ENCODE measurements at regions of chr6 and their contacts with region 1.

Region 1: GRCh38 chr6:138692058-138692977 is 81.3 kb upstream of the CCDC28A start:
- DNase-seq: peak; percentile 76
- H3K4me3 ChIP-seq: peak overlapping the region; percentile 65 to 97 (median 84)
- H3K27ac ChIP-seq: peak overlapping the region; percentile 84 to 93 (median 88)
- H3K4me1 ChIP-seq: peaks cover 0 to 15% (median 9%) of the 10 kb centered on the region in 4 donors
- H3K27me3 ChIP-seq: no peaks in the 10 kb centered on the region
- CTCF ChIP-seq: peak; percentile 59 to 91 (median 85)
- EP300 ChIP-seq: no peak
- POLR2A ChIP-seq: no peak

Region 2: DNA sequence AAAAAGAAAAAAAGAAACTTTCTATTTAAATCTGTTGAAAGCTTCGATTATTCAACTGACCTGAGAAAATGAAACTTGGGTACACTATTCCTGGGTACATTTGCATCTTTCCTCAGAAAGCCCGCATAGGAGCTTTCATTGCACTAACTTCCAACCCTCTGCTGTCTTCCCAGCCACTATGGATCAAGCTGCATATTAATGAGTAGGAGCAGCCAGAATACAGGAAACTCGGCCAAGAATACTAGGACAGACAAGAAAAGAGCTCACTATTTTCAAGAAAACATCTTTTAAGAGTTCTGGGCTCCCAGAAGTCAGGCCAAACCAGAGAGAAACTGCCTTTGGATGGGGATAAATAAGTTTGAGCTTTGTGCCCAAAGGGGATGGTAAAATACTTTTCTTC is 53.7 kb before region 1 on chr6:
- in situ Hi-C with region 1: no loop called
- intact Hi-C with region 1: no loop called
- DNase-seq: no peak
- H3K4me3 ChIP-seq: no peak overlapping the region
- H3K27ac ChIP-seq: no peak overlapping the region
- H3K4me1 ChIP-seq: no peaks in the 10 kb centered on the region
- H3K27me3 ChIP-seq: no peaks in the 10 kb centered on the region
- CTCF ChIP-seq: no peak
- EP300 ChIP-seq: no peak
- POLR2A ChIP-seq: no peak

Region 3: DNA sequence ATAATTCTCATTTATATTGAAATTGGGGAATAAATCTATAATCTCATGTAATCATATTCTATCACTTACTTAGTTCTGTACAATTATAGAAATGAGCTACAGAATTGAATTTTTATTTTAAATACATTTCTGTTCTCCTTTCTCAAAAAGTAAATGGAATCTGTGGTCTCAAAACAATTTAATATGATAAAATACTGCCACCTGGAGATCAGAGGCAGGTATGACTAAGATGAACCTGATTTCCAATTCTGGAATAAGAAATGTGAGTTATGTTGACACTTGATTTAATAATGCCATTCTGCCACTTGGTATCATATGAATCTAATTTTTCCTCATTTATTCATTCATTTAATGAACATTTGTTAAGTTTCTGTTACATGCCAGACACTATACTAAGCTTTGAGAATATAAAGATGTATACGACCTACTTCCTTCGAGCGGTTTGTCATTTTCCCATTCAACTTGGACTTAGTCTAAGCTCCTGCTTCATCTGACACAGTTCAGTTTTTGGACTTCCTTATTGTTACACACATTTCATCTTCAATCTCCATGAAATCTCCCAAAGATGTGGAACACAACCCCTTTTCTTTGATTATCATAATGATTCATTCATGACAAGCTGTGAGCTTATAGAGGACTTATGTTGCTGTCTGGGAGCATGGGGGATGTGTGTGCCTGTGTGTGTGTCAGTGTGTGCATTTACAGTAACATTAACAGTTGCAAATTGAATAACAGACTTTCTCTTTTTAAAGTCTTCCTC is 73.8 kb after region 1 on chr6:
- in situ Hi-C with region 1: loop called in 1 of 4 experiments (anchors 10 kb)
- intact Hi-C with region 1: loop called (anchors 5 kb)
- DNase-seq: no peak
- H3K4me3 ChIP-seq: no peak overlapping the region
- H3K27ac ChIP-seq: no peak overlapping the region
- H3K4me1 ChIP-seq: no peaks in the 10 kb centered on the region
- H3K27me3 ChIP-seq: no peaks in the 10 kb centered on the region
- CTCF ChIP-seq: peak; percentile 56 to 75 (median 62)
- EP300 ChIP-seq: no peak
- POLR2A ChIP-seq: no peak

Region 4: DNA sequence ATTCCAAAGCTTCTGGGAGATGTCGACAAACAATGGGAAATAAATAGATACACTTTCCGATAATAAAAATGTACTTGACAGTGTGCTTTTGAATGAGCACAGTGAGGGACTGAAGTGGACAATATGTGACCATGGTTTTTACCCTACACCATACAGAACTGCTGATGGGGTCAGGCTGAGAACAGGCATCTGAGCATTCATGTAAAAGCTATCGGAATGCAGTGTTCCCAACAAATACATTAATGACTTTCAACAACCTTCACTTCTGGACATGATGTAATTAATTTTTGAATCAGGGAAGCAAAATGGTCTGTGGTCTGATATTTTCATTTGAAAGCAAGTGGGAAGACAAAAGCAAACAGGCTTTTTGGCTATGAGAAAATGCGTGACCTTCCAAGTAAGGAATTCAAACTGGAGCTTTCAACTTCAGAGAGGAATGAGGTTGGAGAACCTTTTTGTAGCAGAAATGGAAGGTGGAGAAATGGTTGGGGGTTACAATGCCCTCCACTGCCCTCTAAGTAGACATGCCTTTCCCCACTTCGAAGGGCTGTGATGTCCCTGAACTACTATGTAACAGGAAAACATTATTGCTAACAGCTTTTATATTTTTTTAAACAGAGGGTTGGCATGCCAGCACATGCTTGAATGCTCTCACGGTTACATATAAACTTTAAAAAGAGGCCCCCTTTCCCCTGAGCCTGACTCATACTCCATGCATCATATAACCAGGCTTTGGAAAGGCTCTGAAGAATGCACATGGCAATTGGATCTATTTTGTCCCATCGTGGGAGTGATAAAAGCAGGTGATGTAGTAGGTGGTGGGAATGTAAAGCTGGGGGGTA is 885.7 kb after region 1 on chr6:
- in situ Hi-C with region 1: no loop called
- intact Hi-C with region 1: loop called (anchors 5 kb)
- DNase-seq: no peak
- H3K4me3 ChIP-seq: no peak overlapping the region
- H3K27ac ChIP-seq: peak overlapping the region in 2 of 4 donors; percentile 10
- H3K4me1 ChIP-seq: no peaks in the 10 kb centered on the region
- H3K27me3 ChIP-seq: no peaks in the 10 kb centered on the region
- CTCF ChIP-seq: no peak
- EP300 ChIP-seq: no peak
- POLR2A ChIP-seq: no peak

Region 5: DNA sequence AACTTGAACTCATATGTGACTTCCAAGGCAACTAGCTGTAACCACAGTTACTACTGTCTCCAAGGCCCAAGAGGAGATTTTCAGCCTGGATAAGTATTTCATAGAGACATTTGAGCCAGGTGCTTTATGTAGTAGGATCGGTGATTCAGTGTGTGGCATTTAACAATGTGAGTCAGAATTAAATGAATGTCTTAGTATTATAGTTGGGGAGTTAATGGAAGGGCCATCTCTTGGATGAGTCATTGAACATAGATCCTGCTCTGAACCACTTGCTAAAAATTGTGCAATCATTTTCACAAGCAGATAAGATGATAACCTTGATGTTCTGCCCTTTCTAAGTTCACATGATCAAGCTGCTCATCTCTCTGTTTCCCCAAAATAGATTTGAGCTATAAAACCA is 1351.0 kb after region 1 on chr6:
- in situ Hi-C with region 1: no loop called
- intact Hi-C with region 1: no loop called
- DNase-seq: no peak
- H3K4me3 ChIP-seq: no peak overlapping the region
- H3K27ac ChIP-seq: no peak overlapping the region
- H3K4me1 ChIP-seq: peaks cover 0 to 3% (median 0%) of the 10 kb centered on the region in 4 donors
- H3K27me3 ChIP-seq: no peaks in the 10 kb centered on the region
- CTCF ChIP-seq: no peak
- EP300 ChIP-seq: no peak
- POLR2A ChIP-seq: no peak

Measured in transverse colon (tissue), 4 donors.